Esophagus squamous epithelium (tissue), 5 donors: ENCODE measurements at regions of chr5 and their contacts with region 1.

Region 1: DNA sequence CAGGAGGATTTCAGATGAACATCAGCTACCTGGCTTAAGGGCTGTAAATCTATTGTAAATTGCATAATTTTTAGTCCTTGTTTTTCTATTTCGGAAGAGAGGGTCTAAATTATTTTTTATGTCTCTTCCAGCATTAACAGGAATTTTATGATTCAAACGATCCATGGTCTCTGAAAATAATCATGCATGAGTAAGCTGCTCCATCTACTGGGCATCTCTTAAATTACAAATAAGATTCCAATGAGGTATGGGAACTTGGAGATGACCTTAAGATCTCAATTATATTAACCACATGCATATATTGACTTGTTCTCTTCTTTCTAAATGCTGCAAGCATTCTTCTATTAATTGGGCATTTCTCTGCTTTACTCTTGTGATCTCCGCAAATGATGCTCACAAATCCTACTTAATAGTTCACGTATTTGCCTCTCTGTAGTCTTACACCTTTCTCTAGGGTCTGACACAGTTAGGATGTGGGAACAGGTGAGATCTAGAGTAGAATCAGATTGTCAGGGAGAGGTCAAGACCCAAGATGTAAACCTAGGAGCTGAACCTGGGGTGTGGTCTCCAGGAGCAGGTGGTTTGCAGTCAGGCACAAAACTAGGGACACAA is 86.9 kb downstream of the NUDT12 start:
- DNase-seq: no peak
- H3K4me3 ChIP-seq: no peak overlapping the region
- H3K27ac ChIP-seq: no peak overlapping the region
- H3K4me1 ChIP-seq: no peaks in the 10 kb centered on the region
- H3K27me3 ChIP-seq: no peaks in the 10 kb centered on the region
- CTCF ChIP-seq: peak in 5 of 6 experiments; percentile 42 to 68 (median 52)
- POLR2A ChIP-seq: no peak

Region 2: DNA sequence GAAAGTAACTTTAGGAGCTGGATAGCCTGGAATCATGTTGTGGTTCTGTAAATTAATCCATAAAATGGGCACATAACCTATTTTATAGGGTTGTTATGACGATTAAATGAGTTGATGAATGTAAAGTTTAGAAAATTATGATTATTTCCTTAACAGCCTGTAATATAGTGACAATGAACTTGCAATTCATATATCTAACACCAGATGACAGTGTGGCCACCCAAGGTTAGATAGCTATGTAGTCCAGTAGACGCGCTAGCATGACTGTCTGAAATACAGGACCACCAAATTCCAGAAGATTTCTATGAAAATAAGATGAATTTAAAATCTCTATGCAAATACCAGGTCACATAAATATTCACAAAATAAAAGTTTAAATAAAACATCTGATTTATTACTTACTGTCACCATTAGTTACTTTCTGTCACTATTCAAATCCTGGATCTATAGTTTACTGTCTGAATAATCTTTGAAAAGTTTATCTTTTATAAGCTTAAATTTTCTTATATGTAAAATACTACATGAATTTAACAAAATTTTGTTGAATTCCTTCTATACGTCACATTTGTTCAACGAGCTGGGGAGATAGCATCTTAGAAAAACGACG is 243.2 kb before region 1 on chr5:
- intact Hi-C with region 1: loop called (anchors 5 kb)
- DNase-seq: no peak
- H3K4me3 ChIP-seq: no peak overlapping the region
- H3K27ac ChIP-seq: no peak overlapping the region
- H3K4me1 ChIP-seq: no peaks in the 10 kb centered on the region
- H3K27me3 ChIP-seq: no peaks in the 10 kb centered on the region
- CTCF ChIP-seq: peak; percentile 39 to 80 (median 68)
- POLR2A ChIP-seq: no peak